ENCODE measurements at regions of chr7 and their contacts with region 1.

Region 1: DNA sequence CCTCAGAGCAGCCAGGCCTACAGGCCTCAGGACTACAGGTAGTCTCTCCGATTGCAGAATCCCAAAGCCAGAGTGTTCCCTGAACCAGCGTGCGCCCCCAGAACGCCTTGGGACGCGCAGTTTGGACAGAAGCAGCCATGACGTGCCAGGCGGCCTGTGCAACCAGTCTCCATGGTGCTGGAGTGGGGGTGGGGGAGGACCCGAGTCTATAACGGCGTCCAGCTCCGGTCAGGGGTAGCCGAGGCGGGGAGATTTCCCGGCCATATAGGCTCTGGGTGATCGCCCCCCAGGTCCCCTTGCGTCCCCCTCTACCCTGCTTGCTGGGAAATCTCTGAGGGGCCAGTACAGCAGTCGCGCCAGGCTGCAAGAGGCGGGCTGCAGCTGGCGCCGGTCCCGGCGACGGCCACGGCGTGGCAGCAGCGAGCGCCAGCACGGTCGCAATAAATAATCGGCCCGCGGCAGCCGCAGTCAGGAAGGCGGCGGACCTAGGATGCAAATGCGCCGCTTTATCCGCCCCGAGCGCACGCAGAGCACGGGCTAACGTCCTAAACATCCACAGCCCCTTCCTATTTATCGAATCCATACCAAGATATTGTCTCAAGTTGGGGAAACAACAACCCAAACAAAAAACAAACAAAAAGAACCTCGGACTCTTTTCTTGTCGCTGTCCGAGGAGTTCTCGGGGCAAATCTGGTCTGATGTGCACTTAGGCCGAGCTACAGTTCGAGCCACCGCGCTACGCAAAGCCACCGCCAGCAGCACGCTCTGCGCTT is 1.6 kb downstream of the HOXA3 start:
- DNase-seq: peak; percentile 69
- ATAC-seq: peak; percentile 91
- H3K4me3 Mint-ChIP-seq: peak overlapping the region; percentile 80
- H3K27ac Mint-ChIP-seq: peak overlapping the region; percentile 12
- H3K4me1 Mint-ChIP-seq: peaks cover 48% of the 10 kb centered on the region
- H3K27me3 Mint-ChIP-seq: peaks cover 76% of the 10 kb centered on the region
- CTCF ChIP-seq: peak; percentile 71

Region 2: GRCh38 chr7:26815426-26815825 is 335.3 kb before region 1 on chr7:
- CTCF ChIA-PET with region 1: no interaction called
- POLR2A ChIA-PET with region 1: no interaction called
- intact Hi-C with region 1: no loop called
- DNase-seq: no peak
- ATAC-seq: no peak
- H3K4me3 Mint-ChIP-seq: no peak overlapping the region
- H3K27ac Mint-ChIP-seq: no peak overlapping the region
- H3K4me1 Mint-ChIP-seq: peaks cover 4% of the 10 kb centered on the region
- H3K27me3 Mint-ChIP-seq: no peaks in the 10 kb centered on the region
- CTCF ChIP-seq: no peak

Region 3: DNA sequence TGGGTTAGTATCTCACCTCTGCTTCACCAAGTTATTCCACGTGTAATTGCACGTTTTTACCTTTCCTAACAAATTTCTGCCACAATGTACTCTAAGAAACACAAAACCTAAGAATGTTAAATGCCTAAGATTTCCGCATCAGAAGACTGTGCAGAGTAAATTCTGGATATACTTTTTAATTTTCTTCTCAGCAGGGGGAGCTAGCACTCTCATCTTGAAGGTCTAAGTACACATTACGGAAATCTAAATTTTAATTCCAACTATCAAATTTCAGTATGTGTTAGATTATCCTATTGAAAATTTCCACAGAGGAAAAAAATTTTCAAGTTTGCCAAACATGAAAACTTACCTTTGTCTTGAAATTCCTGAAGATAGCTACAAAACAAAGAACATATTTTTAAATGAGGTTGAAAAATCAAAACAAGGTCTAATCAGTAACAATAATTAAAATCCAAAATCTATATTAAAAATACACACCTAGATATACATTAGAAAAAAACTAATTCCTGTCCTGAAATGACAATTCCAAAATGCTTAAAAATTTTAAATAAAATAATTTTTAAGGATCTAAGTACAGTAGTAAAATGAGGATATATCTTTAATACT is 296.9 kb before region 1 on chr7:
- CTCF ChIA-PET with region 1: interaction called, 32 read pairs
- POLR2A ChIA-PET with region 1: no interaction called
- intact Hi-C with region 1: no loop called
- DNase-seq: no peak
- ATAC-seq: no peak
- H3K4me3 Mint-ChIP-seq: no peak overlapping the region
- H3K27ac Mint-ChIP-seq: no peak overlapping the region
- H3K4me1 Mint-ChIP-seq: peaks cover 30% of the 10 kb centered on the region
- H3K27me3 Mint-ChIP-seq: no peaks in the 10 kb centered on the region
- CTCF ChIP-seq: no peak

Region 4: GRCh38 chr7:27053153-27053552 is 97.6 kb before region 1 on chr7:
- CTCF ChIA-PET with region 1: no interaction called
- POLR2A ChIA-PET with region 1: no interaction called
- intact Hi-C with region 1: no loop called
- DNase-seq: no peak
- ATAC-seq: no peak
- H3K4me3 Mint-ChIP-seq: no peak overlapping the region
- H3K27ac Mint-ChIP-seq: no peak overlapping the region
- H3K4me1 Mint-ChIP-seq: no peaks in the 10 kb centered on the region
- H3K27me3 Mint-ChIP-seq: peaks cover under 1% of the 10 kb centered on the region
- CTCF ChIP-seq: no peak

Region 5: DNA sequence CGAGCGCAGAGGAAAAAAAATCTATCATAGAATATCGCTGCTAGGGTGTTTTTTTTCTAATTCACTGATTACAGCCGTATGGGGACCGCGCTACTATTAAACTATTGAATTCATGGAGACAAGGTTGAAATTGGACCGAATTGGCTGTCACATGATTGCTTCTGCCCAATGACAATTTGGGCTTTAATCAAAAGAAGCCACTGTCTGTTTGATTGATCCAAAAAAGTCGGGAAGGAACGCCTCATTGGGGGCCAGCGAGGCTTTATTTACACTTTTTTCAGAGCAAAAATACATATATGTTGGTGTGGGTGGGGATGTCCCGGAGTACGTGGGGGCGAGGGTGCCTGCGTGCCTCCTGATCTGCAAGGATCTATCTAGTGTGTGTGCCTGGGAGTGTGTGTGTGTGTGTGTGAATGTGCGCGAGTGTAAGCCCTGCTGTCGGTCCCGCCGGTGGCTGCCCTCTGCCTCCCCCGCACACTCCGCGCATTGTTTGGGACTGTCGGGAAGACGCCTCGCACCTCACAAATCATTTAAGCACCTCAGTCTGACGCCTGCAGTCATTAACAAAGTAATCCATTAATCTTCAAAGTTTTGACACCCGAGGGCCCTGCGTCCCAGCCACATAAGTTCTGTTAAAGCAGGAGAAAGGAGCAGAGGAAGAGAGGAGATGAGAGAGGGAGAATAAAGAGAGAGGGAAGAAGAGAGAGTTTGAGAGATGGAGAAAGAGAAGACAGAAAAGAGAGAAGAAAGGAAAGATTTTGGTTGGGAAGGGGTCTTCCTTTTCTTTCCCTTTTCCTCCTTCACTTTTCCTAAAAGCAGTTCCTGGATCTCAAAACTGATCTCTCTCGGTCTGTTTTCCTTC is 47.9 kb before region 1 on chr7 and contains the start of gene HOXA2:
- CTCF ChIA-PET with region 1: no interaction called
- POLR2A ChIA-PET with region 1: no interaction called
- intact Hi-C with region 1: no loop called
- DNase-seq: no peak
- ATAC-seq: no peak
- H3K4me3 Mint-ChIP-seq: peak within 1 kb of the TSS; percentile 36
- H3K27ac Mint-ChIP-seq: no peak within 1 kb of the TSS
- H3K4me1 Mint-ChIP-seq: peaks cover 24% of the 10 kb centered on the region
- H3K27me3 Mint-ChIP-seq: peaks cover 64% of the 10 kb centered on the region
- CTCF ChIP-seq: no peak
- total RNA-seq, gene HOXA2: not detected in 2 replicates

Region 6: DNA sequence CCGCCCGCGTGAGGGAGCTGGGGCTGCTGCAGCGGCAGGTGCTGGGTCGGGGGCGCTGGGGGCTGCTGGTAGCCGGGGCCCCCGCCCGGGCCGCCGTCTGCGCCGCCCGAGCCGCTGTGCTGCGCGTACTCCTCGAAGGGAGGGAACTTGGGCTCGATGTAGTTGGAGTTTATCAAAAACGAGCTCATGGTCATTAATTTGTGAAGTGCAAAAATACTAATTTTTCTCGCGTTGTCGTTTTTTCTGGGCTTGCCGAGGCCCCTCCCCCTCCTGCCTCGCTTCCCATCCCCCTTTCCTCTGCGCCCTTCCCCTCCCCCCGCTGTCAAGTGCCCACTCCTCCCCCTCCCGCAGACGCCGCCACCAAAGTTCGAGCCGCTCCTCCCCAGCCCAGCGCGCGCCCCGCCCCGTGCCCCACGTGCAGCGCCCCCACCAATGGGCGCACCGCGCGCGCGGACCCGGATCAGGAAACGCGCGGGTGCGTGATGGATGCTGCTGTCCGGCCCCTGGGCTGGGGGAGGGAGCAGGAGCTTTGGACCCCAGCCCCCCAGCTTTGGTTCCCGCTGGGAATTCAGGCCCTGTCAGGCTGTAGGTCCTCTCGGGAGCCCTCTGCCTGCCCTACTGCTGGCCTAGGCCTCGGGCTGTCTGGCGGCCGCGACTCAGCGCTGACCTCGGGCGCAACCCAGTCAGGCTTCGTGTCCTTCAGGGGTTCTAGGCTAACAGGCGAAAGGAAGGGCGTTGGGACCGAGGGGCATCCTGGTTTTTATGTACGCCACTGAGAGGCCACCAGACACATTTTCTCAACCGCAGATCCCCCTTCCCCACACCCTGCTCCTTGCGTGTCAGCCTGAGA is 20.0 kb before region 1 on chr7 and contains the start of gene HOXA4:
- CTCF ChIA-PET with region 1: no interaction called
- POLR2A ChIA-PET with region 1: no interaction called
- intact Hi-C with region 1: loop called (anchors 2 kb)
- DNase-seq: peak; percentile 70
- ATAC-seq: peak; percentile 96
- H3K4me3 Mint-ChIP-seq: peak within 1 kb of the TSS; percentile 76
- H3K27ac Mint-ChIP-seq: no peak within 1 kb of the TSS
- H3K4me1 Mint-ChIP-seq: peaks cover 2% of the 10 kb centered on the region
- H3K27me3 Mint-ChIP-seq: peaks cover 40% of the 10 kb centered on the region
- CTCF ChIP-seq: no peak
- total RNA-seq, gene HOXA4: 0.17 and 0.40 TPM in 2 replicates

Region 7: DNA sequence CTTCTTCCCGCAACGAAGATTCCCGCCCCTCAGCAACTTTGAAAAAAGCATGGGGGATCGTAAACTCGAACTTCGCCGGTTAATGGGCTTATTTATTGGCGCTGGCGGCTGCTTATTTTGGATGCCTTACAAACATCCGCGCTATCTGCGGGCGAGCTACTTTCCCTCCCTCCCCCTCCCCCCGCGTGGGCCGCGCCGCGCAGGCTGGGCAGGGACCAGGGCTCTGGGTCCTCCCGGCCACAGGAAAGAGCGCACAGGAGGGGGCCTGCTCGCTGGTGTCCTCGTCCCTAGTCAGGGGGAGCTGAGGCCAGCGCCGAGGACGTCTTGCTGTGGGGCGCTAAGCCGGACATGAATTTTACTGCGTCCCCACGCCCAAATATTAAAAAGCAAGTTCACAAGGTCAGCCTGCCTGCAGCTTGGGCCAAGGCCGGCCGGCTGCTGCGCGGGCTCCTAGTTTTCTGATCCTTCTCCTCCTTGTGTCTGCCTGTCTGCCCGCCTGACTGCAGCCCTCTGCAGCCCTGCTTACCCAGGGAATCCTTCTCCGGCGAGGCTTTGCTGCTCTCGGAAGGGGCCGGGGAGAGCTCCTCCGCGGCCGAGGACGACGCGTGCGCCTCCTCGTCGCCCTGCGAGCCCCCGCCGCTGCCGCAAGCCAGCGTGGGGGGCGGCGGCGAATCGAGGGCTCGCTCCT is 22.2 kb after region 1 on chr7:
- CTCF ChIA-PET with region 1: interaction called, 8 read pairs
- POLR2A ChIA-PET with region 1: no interaction called
- intact Hi-C with region 1: loop called (anchors 1 kb)
- DNase-seq: no peak
- ATAC-seq: peak; percentile 32
- H3K4me3 Mint-ChIP-seq: peak overlapping the region; percentile 55
- H3K27ac Mint-ChIP-seq: no peak overlapping the region
- H3K4me1 Mint-ChIP-seq: peaks cover 20% of the 10 kb centered on the region
- H3K27me3 Mint-ChIP-seq: peaks cover 54% of the 10 kb centered on the region
- CTCF ChIP-seq: no peak

Region 8: GRCh38 chr7:27188386-27189294 is 37.9 kb after region 1 on chr7:
- CTCF ChIA-PET with region 1: interaction called, 6 read pairs
- POLR2A ChIA-PET with region 1: no interaction called
- intact Hi-C with region 1: loop called (anchors 2 kb)
- DNase-seq: peak; percentile 36
- ATAC-seq: no peak
- H3K4me3 Mint-ChIP-seq: peak overlapping the region; percentile 69
- H3K27ac Mint-ChIP-seq: no peak overlapping the region
- H3K4me1 Mint-ChIP-seq: peaks cover 54% of the 10 kb centered on the region
- H3K27me3 Mint-ChIP-seq: peaks cover 76% of the 10 kb centered on the region
- CTCF ChIP-seq: no peak

Region 9: DNA sequence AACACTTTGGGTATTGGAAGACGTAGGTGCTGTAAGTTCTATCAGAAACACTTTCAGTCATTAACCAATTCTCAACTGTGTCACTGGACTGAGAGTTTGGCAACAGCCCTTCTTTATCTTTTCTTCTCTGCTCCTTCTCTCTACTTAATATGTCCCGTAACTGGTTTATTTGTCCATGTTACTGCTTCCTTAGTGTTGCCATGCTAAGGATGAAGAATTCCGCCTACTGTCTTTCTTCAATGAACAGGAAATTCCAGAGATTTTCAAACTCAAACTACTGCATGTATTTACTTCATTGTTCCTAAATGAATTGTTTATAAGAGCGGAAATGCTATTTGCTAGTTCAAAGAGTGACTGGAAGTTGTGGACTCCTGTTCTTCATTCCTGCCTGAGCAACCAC is 732.9 kb after region 1 on chr7:
- CTCF ChIA-PET with region 1: no interaction called
- POLR2A ChIA-PET with region 1: no interaction called
- intact Hi-C with region 1: no loop called
- DNase-seq: no peak
- ATAC-seq: no peak
- H3K4me3 Mint-ChIP-seq: no peak overlapping the region
- H3K27ac Mint-ChIP-seq: no peak overlapping the region
- H3K4me1 Mint-ChIP-seq: no peaks in the 10 kb centered on the region
- H3K27me3 Mint-ChIP-seq: no peaks in the 10 kb centered on the region
- CTCF ChIP-seq: no peak